ENCODE measurements at regions of chr7 and their contacts with region 1.

Region 1: GRCh38 chr7:138886501-138886917 is 88.5 kb upstream of the ATP6V0A4 start:
- DNase-seq: peak; percentile 42
- ATAC-seq: peak; percentile 95
- H3K4me3 ChIP-seq: no peak overlapping the region
- H3K27ac ChIP-seq: peak overlapping the region; percentile 18; the same call in 1 of the 2 replicates
- H3K4me1 ChIP-seq: no peaks in the 10 kb centered on the region
- H3K27me3 ChIP-seq: no peaks in the 10 kb centered on the region
- CTCF ChIP-seq: peak; percentile 60 to 78 (median 73)
- EP300 ChIP-seq: no peak
- POLR2A ChIP-seq: no peak
- RAD21 ChIP-seq: peak; percentile 66

Region 2: DNA sequence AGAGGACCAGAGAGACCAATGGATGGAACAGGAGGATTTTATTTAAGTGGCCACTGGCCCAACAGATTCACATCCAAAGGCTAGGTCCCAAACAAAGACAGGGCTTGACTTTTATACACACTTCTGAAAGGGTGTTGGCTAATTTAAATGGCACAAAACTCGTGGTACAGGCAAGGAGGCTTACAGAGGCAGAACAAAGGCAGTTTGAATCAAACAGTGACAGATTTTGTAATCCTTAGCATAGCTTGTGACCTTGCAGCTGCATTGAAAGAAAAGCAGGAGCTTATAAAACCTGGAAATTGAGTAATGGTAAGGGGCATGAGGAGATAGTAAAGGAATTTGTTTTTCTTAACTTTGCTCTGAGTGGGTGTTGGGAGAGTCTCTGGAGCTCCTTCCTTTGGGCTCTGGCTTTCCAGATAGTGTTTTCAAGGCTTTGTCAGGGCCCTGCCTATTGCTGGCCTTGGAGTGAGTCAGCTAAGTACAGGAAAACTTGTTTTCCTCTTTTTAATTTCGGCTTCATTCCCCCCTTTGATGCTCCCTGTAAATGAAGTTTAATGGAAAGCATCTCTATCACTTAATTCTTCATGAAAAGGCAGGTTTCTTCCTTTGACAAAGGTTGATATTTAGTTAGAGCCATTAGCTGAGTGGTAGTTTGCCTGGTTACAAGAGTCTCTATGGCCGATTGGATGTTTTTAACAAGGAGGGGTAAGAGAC is 329.6 kb before region 1 on chr7:
- CTCF ChIA-PET with region 1: no interaction called
- POLR2A ChIA-PET with region 1: no interaction called
- RAD21 ChIA-PET with region 1: no interaction called
- SMC1A ChIA-PET with region 1: no interaction called
- in situ Hi-C with region 1: no loop called
- intact Hi-C with region 1: no loop called
- DNase-seq: no peak
- ATAC-seq: no peak
- H3K4me3 ChIP-seq: no peak overlapping the region
- H3K27ac ChIP-seq: no peak overlapping the region
- H3K4me1 ChIP-seq: no peaks in the 10 kb centered on the region
- H3K27me3 ChIP-seq: no peaks in the 10 kb centered on the region
- CTCF ChIP-seq: no peak
- EP300 ChIP-seq: no peak
- POLR2A ChIP-seq: no peak
- RAD21 ChIP-seq: no peak

Region 3: GRCh38 chr7:138875794-138876193 is 10.7 kb before region 1 on chr7:
- CTCF ChIA-PET with region 1: interaction called, 16 read pairs
- POLR2A ChIA-PET with region 1: no interaction called
- RAD21 ChIA-PET with region 1: interaction called, 5 read pairs
- SMC1A ChIA-PET with region 1: interaction called, 6 read pairs
- in situ Hi-C with region 1: no loop called
- intact Hi-C with region 1: no loop called
- DNase-seq: no peak
- ATAC-seq: no peak
- H3K4me3 ChIP-seq: no peak overlapping the region
- H3K27ac ChIP-seq: no peak overlapping the region
- H3K4me1 ChIP-seq: no peaks in the 10 kb centered on the region
- H3K27me3 ChIP-seq: no peaks in the 10 kb centered on the region
- CTCF ChIP-seq: no peak
- EP300 ChIP-seq: no peak
- POLR2A ChIP-seq: no peak
- RAD21 ChIP-seq: no peak

Region 4: GRCh38 chr7:138981332-138982203 is 95.1 kb after region 1 on chr7 and contains the start of gene KIAA1549:
- CTCF ChIA-PET with region 1: interaction called, 11 read pairs
- POLR2A ChIA-PET with region 1: interaction called, 3 read pairs
- RAD21 ChIA-PET with region 1: interaction called, 3 read pairs
- SMC1A ChIA-PET with region 1: interaction called, 9 read pairs
- in situ Hi-C with region 1: loop called (anchors 5 kb)
- intact Hi-C with region 1: loop called (anchors 1 kb)
- DNase-seq: no peak
- ATAC-seq: peak; percentile 89
- H3K4me3 ChIP-seq: peak within 1 kb of the TSS; percentile 73; the same call in 1 of the 2 replicates
- H3K27ac ChIP-seq: no peak within 1 kb of the TSS
- H3K4me1 ChIP-seq: no peaks in the 10 kb centered on the region
- H3K27me3 ChIP-seq: peaks cover 8% of the 10 kb centered on the region in 2 experiments
- CTCF ChIP-seq: peak in 1 of 3 experiments; percentile 42; a peak in 3 of 6 replicates
- EP300 ChIP-seq: no peak
- POLR2A ChIP-seq: no peak
- RAD21 ChIP-seq: peak; percentile 35; the same call in 1 of the 2 replicates
- polyA plus RNA-seq, gene KIAA1549: 0.02 to 0.05 TPM

Region 5: GRCh38 chr7:138987686-138988085 is 101.2 kb after region 1 on chr7:
- CTCF ChIA-PET with region 1: interaction called, 11 read pairs
- POLR2A ChIA-PET with region 1: interaction called, 3 read pairs
- RAD21 ChIA-PET with region 1: no interaction called
- SMC1A ChIA-PET with region 1: interaction called, 9 read pairs
- in situ Hi-C with region 1: loop called (anchors 5 kb)
- intact Hi-C with region 1: no loop called
- DNase-seq: no peak
- ATAC-seq: no peak
- H3K4me3 ChIP-seq: no peak overlapping the region
- H3K27ac ChIP-seq: no peak overlapping the region
- H3K4me1 ChIP-seq: no peaks in the 10 kb centered on the region
- H3K27me3 ChIP-seq: peaks cover 2% of the 10 kb centered on the region in 2 experiments; a peak in 1 of 4 replicates
- CTCF ChIP-seq: no peak
- EP300 ChIP-seq: no peak
- POLR2A ChIP-seq: no peak
- RAD21 ChIP-seq: no peak

Region 6: DNA sequence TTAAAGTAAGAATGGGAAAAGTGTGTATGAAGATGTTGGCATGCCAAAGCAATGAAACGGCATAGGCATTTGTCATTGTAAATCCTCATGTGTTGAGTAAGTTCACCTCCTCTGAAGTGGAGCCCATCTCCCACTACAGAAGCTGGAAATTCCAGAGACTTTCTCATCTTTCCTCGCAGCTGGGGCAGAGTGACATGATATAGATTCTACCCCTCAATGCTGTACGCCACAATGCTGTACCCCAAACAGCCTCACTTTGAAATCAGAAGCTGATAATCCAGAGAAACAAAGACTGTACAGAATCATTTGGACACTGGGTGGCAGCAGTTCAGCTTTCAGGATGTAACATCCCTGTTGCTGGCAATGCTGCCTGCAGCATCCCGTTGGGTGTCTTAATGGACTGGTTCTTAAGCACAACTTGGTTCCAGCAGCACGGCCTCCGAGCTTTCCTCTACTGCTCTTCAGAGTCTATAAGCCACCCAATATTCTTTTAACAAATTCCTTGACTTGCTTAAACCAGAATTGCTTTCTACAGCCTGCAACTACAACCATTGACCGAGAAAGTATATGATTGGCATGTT is 130.5 kb after region 1 on chr7:
- CTCF ChIA-PET with region 1: interaction called, 19 read pairs
- POLR2A ChIA-PET with region 1: no interaction called
- RAD21 ChIA-PET with region 1: interaction called, 12 read pairs
- SMC1A ChIA-PET with region 1: interaction called, 10 read pairs
- in situ Hi-C with region 1: no loop called
- intact Hi-C with region 1: no loop called
- DNase-seq: no peak
- ATAC-seq: peak; percentile 99
- H3K4me3 ChIP-seq: no peak overlapping the region
- H3K27ac ChIP-seq: no peak overlapping the region
- H3K4me1 ChIP-seq: no peaks in the 10 kb centered on the region
- H3K27me3 ChIP-seq: no peaks in the 10 kb centered on the region
- CTCF ChIP-seq: peak; percentile 76 to 81 (median 79)
- EP300 ChIP-seq: no peak
- POLR2A ChIP-seq: no peak
- RAD21 ChIP-seq: peak; percentile 66

Region 7: DNA sequence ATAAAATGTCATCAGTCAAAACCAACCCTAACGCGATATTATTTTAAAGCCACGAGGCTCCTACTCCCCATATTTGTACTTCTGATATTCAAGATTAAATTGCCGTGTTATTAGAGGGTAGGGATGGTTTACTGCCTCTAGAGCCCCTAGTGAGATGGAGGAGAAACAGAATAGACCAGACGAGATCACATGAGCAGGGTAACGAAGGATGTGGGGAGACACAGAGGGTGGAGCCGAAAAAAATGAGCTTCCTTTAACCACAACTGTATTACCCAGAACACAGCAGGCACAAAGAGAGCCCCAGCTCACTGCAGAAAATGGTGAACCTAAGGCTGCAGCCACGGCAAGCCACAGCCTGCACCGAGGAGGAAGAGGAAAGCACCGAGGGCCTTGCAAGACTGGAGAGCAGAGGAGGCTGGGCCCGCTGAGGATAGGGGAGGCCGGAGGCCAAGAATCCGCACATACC is 208.7 kb after region 1 on chr7:
- CTCF ChIA-PET with region 1: interaction called, 12 read pairs
- POLR2A ChIA-PET with region 1: no interaction called
- RAD21 ChIA-PET with region 1: interaction called, 4 read pairs
- SMC1A ChIA-PET with region 1: interaction called, 6 read pairs
- in situ Hi-C with region 1: no loop called
- intact Hi-C with region 1: no loop called
- DNase-seq: peak; percentile 88
- ATAC-seq: peak; percentile 99
- H3K4me3 ChIP-seq: peak overlapping the region; percentile 65
- H3K27ac ChIP-seq: peak overlapping the region; percentile 70
- H3K4me1 ChIP-seq: peaks cover 20% of the 10 kb centered on the region
- H3K27me3 ChIP-seq: no peaks in the 10 kb centered on the region
- CTCF ChIP-seq: 0 out of 6 replicates have a peak, but pooled peaks of 2 of the 3 experiments have one; percentile 2 to 5
- EP300 ChIP-seq: peak in 1 of 2 experiments; percentile 38; a peak in 1 of 4 replicates
- POLR2A ChIP-seq: peak; percentile 74
- RAD21 ChIP-seq: no peak

Region 8: GRCh38 chr7:139124084-139124914 is 237.8 kb after region 1 on chr7:
- CTCF ChIA-PET with region 1: interaction called, 6 read pairs
- POLR2A ChIA-PET with region 1: no interaction called
- RAD21 ChIA-PET with region 1: interaction called, 8 read pairs
- SMC1A ChIA-PET with region 1: interaction called, 10 read pairs
- in situ Hi-C with region 1: no loop called
- intact Hi-C with region 1: no loop called
- DNase-seq: no peak
- ATAC-seq: peak; percentile 69
- H3K4me3 ChIP-seq: no peak overlapping the region
- H3K27ac ChIP-seq: no peak overlapping the region
- H3K4me1 ChIP-seq: peaks cover 25% of the 10 kb centered on the region
- H3K27me3 ChIP-seq: no peaks in the 10 kb centered on the region
- CTCF ChIP-seq: no peak
- EP300 ChIP-seq: no peak
- POLR2A ChIP-seq: no peak
- RAD21 ChIP-seq: no peak

Measured in GM12878 (cell line).